ENCODE measurements at regions of chr11 and their contacts with region 1.

Region 1: DNA sequence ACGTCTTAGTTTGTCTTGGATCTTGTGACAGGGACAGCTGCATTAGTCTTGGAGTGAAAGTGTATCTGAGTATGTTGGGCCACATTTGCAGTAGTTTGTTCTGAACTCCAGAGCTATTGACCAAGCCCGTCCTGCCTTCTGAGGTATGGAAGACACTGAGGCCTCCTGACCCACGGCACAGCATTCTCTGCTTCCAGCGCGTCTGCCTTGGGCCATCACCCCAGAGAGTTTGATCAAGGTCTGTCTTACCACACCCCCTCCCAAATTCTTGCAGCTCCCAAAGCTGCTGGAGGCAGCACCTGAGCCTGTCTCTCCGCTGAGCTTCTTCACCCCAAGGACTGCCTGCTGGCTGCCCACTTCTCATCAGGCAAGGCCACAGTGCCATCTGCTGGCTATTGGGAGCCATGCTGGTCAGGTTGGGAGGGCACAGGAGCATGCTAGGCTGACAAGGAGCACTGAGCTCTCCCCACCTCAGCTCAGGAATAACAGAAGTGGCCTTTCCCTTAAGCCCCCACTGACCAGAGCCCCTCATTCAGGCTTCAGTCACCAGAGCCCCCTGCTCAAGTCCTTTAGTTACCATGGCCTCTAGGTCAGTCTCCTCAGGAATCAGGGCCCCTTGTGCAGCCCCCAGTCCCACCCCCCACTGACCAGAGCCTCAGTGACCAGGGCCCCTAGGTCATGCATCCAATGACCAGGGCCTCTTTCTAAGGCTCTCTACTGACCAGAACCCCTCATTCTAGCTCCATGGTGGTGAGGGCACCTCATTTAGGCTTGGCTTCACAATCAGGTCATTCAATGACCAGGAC is 27.2 kb upstream of the SMPD1 start:
- DNase-seq: peak; percentile 91
- H3K4me3 Mint-ChIP-seq: no peak overlapping the region
- H3K27ac Mint-ChIP-seq: no peak overlapping the region
- H3K4me1 Mint-ChIP-seq: peaks cover 5% of the 10 kb centered on the region
- H3K27me3 Mint-ChIP-seq: no peaks in the 10 kb centered on the region

Region 2: GRCh38 chr11:6006395-6006794 is 356.7 kb before region 1 on chr11:
- intact Hi-C with region 1: no loop called
- DNase-seq: no peak
- H3K4me3 Mint-ChIP-seq: no peak overlapping the region
- H3K27ac Mint-ChIP-seq: no peak overlapping the region
- H3K4me1 Mint-ChIP-seq: no peaks in the 10 kb centered on the region
- H3K27me3 Mint-ChIP-seq: peaks cover 20% of the 10 kb centered on the region

Region 3: GRCh38 chr11:6251120-6251733 is 111.8 kb before region 1 on chr11:
- intact Hi-C with region 1: loop called (anchors 1 kb)
- DNase-seq: peak; percentile 86
- H3K4me3 Mint-ChIP-seq: no peak overlapping the region
- H3K27ac Mint-ChIP-seq: no peak overlapping the region
- H3K4me1 Mint-ChIP-seq: no peaks in the 10 kb centered on the region
- H3K27me3 Mint-ChIP-seq: peaks cover 11% of the 10 kb centered on the region

Region 4: DNA sequence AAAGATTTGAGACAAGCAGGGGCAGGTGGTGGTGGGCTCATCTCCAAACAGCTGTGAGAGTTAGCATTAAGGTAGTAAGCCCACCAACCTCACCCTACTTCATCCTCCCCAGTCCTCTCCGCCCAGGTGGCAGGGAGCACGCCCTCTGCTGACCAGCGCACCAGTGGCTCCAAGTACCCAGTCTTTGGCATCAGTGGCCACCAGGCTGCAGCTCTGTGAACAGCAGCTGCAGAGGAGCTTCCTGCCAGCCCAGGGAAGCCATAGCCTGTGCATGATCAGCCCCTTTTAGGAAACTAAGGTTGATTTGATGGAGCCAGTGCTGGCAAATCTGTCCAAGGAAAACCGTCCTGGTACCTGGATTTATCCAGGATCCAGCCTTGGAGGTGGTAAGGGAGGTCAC is 64.5 kb before region 1 on chr11:
- intact Hi-C with region 1: loop called (anchors 2 kb)
- DNase-seq: no peak
- H3K4me3 Mint-ChIP-seq: no peak overlapping the region
- H3K27ac Mint-ChIP-seq: no peak overlapping the region
- H3K4me1 Mint-ChIP-seq: no peaks in the 10 kb centered on the region
- H3K27me3 Mint-ChIP-seq: peaks cover 11% of the 10 kb centered on the region

Measured in activated CD4-positive, alpha-beta T cell treated with anti-CD3 and anti-CD28 coated beads, Interleukin-2, amount 10 ng/mL, durations not matched to agents 24 days and 14 days (primary cell).